ENCODE measurements at regions of chr2 and their contacts with region 1.

Region 1: DNA sequence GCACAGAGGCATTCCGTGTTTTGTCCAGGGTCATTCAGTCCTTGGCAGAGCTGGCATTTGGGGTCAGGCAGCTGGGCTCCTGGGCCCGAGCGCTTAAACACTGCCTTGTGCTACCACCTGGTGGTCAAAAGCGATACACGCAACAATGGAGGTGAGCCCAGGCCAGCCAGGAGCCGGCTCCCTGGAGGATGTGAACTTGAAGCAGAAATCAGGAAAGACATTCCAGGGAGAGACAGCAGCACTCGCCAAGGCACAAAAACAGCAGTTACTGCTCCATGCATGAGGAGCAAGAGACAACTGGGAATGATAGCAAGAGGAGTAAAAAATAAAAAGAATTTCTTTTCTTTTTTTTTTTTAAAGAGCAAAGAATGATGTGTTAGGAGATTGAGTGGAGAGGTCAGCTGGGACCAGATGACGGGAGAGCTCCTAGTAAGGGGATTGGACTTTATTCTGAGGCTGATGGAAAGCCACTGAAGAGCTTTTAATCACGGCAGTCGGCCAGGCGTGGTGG is 20.7 kb downstream of the SCYGR8 start:
- DNase-seq: peak; percentile 71 to 85
- ATAC-seq: peak; percentile 98 to 99
- H3K4me3 ChIP-seq: no peak overlapping the region
- H3K27ac ChIP-seq: peak overlapping the region; percentile 77 to 84
- H3K4me1 ChIP-seq: peaks cover 33% of the 10 kb centered on the region
- CTCF ChIP-seq: peak; percentile 91
- EP300 ChIP-seq: no peak
- POLR2A ChIP-seq: no peak
- RAD21 ChIP-seq: peak; percentile 97 to 99

Region 2: GRCh38 chr2:227479865-227480475 is 286.5 kb before region 1 on chr2:
- CTCF ChIA-PET with region 1: interaction called, 15 read pairs
- POLR2A ChIA-PET with region 1: no interaction called
- DNase-seq: peak; percentile 41 to 65
- ATAC-seq: peak; percentile 79 to 89; a peak in 5 of 6 replicates
- H3K4me3 ChIP-seq: no peak overlapping the region
- H3K27ac ChIP-seq: peak overlapping the region; percentile 7 to 20; a peak in 2 of 6 replicates
- H3K4me1 ChIP-seq: peaks cover 93% of the 10 kb centered on the region
- CTCF ChIP-seq: peak; percentile 73
- EP300 ChIP-seq: no peak
- POLR2A ChIP-seq: no peak
- RAD21 ChIP-seq: peak; percentile 71 to 74

Region 3: GRCh38 chr2:227657199-227657845 is 109.1 kb before region 1 on chr2:
- CTCF ChIA-PET with region 1: interaction called, 84 read pairs
- POLR2A ChIA-PET with region 1: interaction called, 4 read pairs
- DNase-seq: peak in 1 of 2 experiments; percentile 37
- ATAC-seq: peak in 1 of 2 experiments; percentile 13; a peak in 3 of 6 replicates
- H3K4me3 ChIP-seq: no peak overlapping the region
- H3K27ac ChIP-seq: peak overlapping the region; percentile 81 to 89
- H3K4me1 ChIP-seq: peaks cover 54% of the 10 kb centered on the region
- CTCF ChIP-seq: no peak
- EP300 ChIP-seq: no peak
- POLR2A ChIP-seq: no peak
- RAD21 ChIP-seq: no peak

Region 4: GRCh38 chr2:227783404-227784138 is 17.1 kb after region 1 on chr2:
- CTCF ChIA-PET with region 1: interaction called, 19 read pairs
- POLR2A ChIA-PET with region 1: no interaction called
- DNase-seq: no peak
- ATAC-seq: no peak
- H3K4me3 ChIP-seq: no peak overlapping the region
- H3K27ac ChIP-seq: no peak overlapping the region
- H3K4me1 ChIP-seq: peaks cover 3% of the 10 kb centered on the region; the same call in 2 of the 3 replicates
- CTCF ChIP-seq: no peak
- EP300 ChIP-seq: no peak
- POLR2A ChIP-seq: no peak
- RAD21 ChIP-seq: no peak

Measured in A549 (cell line).